Activated naive CD8-positive, alpha-beta T cell treated with anti-CD3 and anti-CD28 coated beads, Interleukin-2, amount 10 ng/mL, durations not matched to agents 7 days and 5 days (primary cell): ENCODE measurements at regions of chr17 and their contacts with region 1.

Region 1: DNA sequence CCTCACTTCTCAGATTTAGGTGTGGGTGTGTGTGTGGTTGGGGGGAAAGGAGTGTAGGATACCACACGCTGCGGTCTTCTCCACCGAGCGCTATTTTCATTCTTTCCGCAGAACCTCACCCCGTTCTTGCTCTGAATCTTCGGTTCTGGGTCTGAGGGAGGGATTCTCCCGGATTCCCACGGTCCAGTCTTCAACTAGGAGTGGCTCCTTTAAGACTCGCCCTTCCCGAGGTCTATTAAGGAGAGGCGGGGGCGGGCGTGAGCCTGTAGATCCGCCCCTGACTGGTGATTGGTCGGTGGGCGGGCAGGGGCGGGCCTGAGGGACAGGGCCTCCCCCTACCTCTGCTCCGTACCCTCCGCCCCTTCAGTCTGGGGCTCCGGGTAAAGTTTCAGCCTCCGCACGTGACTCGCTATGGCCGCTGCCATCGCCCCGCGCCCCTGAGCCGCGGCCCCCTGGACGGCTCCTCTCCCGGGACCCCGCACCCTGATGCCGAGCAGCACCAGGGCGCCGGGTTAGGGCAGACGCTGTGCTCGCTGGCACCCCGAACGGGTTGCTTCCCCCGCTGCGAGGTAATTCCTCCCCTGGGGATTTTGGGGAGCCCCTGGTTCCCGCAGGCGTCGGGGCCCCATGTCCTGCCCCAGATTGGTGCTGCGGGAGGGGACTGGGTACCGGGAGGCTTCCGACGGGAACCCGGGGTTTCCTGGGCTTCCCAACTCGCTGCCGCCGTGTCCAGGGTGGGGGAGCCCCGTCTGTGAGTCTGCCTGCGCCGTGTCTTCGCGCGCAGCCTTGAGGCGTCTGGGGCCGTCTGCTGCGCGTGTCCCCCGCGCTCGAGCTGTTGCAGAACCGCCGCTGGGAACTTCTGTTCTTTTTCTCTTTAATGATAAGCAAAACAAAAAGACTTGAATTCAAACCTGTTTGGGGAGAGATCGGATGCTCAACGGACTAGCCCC is 9.2 kb downstream of the RARA start:
- DNase-seq: peak; percentile 91
- ATAC-seq: peak; percentile 67
- H3K4me3 Mint-ChIP-seq: peak overlapping the region; percentile 99
- H3K27ac Mint-ChIP-seq: peak overlapping the region; percentile 98
- H3K4me1 Mint-ChIP-seq: peaks cover 65% of the 10 kb centered on the region
- H3K27me3 Mint-ChIP-seq: no peaks in the 10 kb centered on the region

Region 2: GRCh38 chr17:40303009-40303657 is 15.0 kb before region 1 on chr17:
- POLR2A ChIA-PET with region 1: interaction called, 79 read pairs
- DNase-seq: no peak
- ATAC-seq: no peak
- H3K4me3 Mint-ChIP-seq: no peak overlapping the region
- H3K27ac Mint-ChIP-seq: peak overlapping the region; percentile 1
- H3K4me1 Mint-ChIP-seq: peaks cover 22% of the 10 kb centered on the region
- H3K27me3 Mint-ChIP-seq: no peaks in the 10 kb centered on the region

Region 3: GRCh38 chr17:40331743-40332641 is 13.8 kb after region 1 on chr17:
- POLR2A ChIA-PET with region 1: interaction called, 37 read pairs
- DNase-seq: no peak
- ATAC-seq: peak; percentile 4
- H3K4me3 Mint-ChIP-seq: peak overlapping the region; percentile 72
- H3K27ac Mint-ChIP-seq: peak overlapping the region; percentile 81
- H3K4me1 Mint-ChIP-seq: peaks cover 69% of the 10 kb centered on the region
- H3K27me3 Mint-ChIP-seq: no peaks in the 10 kb centered on the region

Region 4: GRCh38 chr17:40340880-40341807 is 23.0 kb after region 1 on chr17:
- POLR2A ChIA-PET with region 1: interaction called, 170 read pairs
- DNase-seq: peak; percentile 85
- ATAC-seq: peak; percentile 81
- H3K4me3 Mint-ChIP-seq: peak overlapping the region; percentile 84
- H3K27ac Mint-ChIP-seq: peak overlapping the region; percentile 87
- H3K4me1 Mint-ChIP-seq: peaks cover 65% of the 10 kb centered on the region
- H3K27me3 Mint-ChIP-seq: no peaks in the 10 kb centered on the region

Region 5: DNA sequence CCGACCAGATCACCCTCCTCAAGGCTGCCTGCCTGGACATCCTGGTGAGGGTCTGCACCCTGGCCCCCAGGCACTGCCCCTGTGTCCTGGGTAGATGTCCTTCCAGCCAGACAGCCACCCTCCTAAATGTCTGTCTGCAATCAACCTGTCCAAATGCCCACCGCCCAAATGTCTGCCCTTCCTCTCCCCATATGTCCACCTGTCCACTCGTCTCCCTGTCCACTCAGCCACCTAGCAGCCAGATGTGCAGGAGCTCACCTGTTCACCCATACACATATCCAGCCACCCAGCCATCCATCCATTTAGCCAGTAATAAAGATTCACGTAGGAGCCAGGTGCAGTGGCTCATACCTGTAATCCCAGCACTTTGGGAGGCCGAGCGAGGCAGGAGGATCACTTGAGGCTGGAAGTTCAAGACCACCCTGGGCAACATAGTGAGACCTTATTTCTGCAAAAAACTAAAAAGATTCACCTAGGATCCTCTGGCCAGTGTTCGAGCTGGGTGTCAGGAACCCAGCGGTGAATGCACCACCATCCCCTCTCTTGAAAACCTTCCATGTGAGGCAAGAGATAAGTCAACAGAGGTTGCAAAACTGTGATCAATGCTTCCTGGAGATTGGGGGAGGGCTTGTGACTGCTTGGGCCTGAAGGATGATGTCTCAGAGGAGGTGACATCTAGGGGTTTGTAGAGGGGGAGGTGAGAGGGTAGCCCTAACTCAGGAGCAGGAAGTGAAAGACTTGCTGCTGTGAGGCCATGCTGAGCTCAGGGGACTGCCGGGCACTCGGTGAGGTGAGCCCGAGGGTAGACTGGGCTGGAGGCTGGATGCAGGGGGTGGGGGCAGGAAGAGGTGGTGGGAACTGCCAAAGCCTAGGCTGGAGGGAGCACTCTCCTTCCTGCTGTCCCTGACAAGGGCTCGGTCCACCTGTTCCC is 34.6 kb after region 1 on chr17:
- POLR2A ChIA-PET with region 1: interaction called, 17 read pairs
- DNase-seq: no peak
- ATAC-seq: peak; percentile 54
- H3K4me3 Mint-ChIP-seq: peak overlapping the region; percentile 15
- H3K27ac Mint-ChIP-seq: peak overlapping the region; percentile 82
- H3K4me1 Mint-ChIP-seq: peaks cover 26% of the 10 kb centered on the region
- H3K27me3 Mint-ChIP-seq: no peaks in the 10 kb centered on the region